B cell (primary cell): ENCODE measurements at regions of chr11 and their contacts with region 1.

Region 1: DNA sequence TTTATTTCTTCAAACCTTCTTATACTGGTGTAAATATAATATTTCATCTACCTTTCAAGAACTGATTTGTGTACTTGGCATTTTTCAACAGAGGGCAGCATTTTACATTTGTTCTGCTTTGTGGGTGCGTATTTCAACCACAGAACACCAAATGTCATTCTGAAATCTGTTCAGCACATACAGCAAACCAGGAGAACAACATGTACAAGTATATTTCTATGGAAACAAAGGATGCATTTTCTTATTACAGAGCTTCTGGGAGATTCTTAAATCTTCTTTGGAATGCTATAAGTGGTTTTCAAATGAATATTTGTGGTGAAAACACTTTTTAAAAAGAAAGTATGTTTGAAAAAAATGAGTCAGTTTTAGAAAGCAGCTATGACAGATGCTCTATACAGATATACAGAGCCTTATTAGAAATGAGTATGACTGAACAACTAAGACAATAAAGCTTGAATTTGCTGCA is 946.0 kb downstream of the FAM181B start:
- DNase-seq: peak; percentile 33
- ATAC-seq: no peak
- H3K4me3 ChIP-seq: no peak overlapping the region
- H3K4me3 Mint-ChIP-seq: no peak overlapping the region
- H3K27ac ChIP-seq: no peak overlapping the region
- H3K27ac Mint-ChIP-seq: no peak overlapping the region
- H3K4me1 ChIP-seq: no peaks in the 10 kb centered on the region
- H3K4me1 Mint-ChIP-seq: no peaks in the 10 kb centered on the region
- H3K27me3 ChIP-seq: no peaks in the 10 kb centered on the region
- H3K27me3 Mint-ChIP-seq: no peaks in the 10 kb centered on the region
- CTCF ChIP-seq: peak; percentile 45

Region 2: DNA sequence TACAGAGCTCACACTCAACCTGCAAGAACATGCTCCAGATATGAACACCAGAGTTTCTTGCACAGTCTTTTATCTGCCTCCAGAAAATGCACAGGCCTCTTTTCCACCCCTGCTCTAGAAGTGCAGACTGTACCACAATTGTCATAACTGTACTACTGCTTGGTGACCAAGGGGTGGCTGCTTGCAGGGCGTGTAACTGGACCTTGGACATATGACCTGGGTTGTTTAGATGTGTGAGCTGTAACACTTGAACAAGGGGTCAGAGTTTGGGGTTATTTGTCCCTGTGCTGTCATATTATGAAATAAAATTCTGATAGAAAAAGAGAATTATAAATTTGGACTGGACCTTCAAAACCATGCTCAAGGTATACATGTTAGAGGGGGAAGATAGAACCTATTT is 239.5 kb before region 1 on chr11:
- CTCF ChIA-PET with region 1: no interaction called
- POLR2A ChIA-PET with region 1: no interaction called
- intact Hi-C with region 1: no loop called
- DNase-seq: no peak
- ATAC-seq: no peak
- H3K4me3 ChIP-seq: no peak overlapping the region
- H3K4me3 Mint-ChIP-seq: no peak overlapping the region
- H3K27ac ChIP-seq: no peak overlapping the region
- H3K27ac Mint-ChIP-seq: no peak overlapping the region
- H3K4me1 ChIP-seq: no peaks in the 10 kb centered on the region
- H3K4me1 Mint-ChIP-seq: no peaks in the 10 kb centered on the region
- H3K27me3 ChIP-seq: no peaks in the 10 kb centered on the region
- H3K27me3 Mint-ChIP-seq: no peaks in the 10 kb centered on the region
- CTCF ChIP-seq: no peak

Region 3: GRCh38 chr11:81829976-81830375 is 42.4 kb after region 1 on chr11:
- CTCF ChIA-PET with region 1: no interaction called
- POLR2A ChIA-PET with region 1: no interaction called
- intact Hi-C with region 1: no loop called
- DNase-seq: no peak
- ATAC-seq: no peak
- H3K4me3 ChIP-seq: no peak overlapping the region
- H3K4me3 Mint-ChIP-seq: no peak overlapping the region
- H3K27ac ChIP-seq: no peak overlapping the region
- H3K27ac Mint-ChIP-seq: no peak overlapping the region
- H3K4me1 ChIP-seq: no peaks in the 10 kb centered on the region
- H3K4me1 Mint-ChIP-seq: no peaks in the 10 kb centered on the region
- H3K27me3 ChIP-seq: no peaks in the 10 kb centered on the region
- H3K27me3 Mint-ChIP-seq: no peaks in the 10 kb centered on the region
- CTCF ChIP-seq: no peak

Region 4: DNA sequence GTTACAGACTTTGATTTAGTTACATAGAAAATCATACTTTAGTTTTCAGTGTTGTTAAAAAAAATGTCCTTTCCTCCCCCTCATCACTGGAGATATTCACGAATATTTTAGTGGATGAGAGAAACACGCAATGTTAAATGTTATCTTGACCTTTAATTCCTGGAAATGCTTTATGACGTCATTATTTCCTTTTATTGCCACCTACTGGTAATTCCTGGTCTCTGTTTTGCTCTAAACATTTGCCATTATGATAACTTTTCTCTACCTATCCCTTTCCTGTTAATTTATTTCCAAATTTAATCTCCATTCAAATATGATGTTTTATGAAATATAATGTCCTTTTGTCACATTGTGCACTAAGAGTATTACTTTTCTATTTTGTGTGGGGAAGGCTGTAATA is 175.4 kb after region 1 on chr11:
- CTCF ChIA-PET with region 1: interaction called, 11 read pairs
- POLR2A ChIA-PET with region 1: no interaction called
- intact Hi-C with region 1: loop called (anchors 5 kb)
- DNase-seq: peak; percentile 8
- ATAC-seq: no peak
- H3K4me3 ChIP-seq: no peak overlapping the region
- H3K4me3 Mint-ChIP-seq: no peak overlapping the region
- H3K27ac ChIP-seq: no peak overlapping the region
- H3K27ac Mint-ChIP-seq: no peak overlapping the region
- H3K4me1 ChIP-seq: no peaks in the 10 kb centered on the region
- H3K4me1 Mint-ChIP-seq: peaks cover 5% of the 10 kb centered on the region
- H3K27me3 ChIP-seq: no peaks in the 10 kb centered on the region
- H3K27me3 Mint-ChIP-seq: no peaks in the 10 kb centered on the region
- CTCF ChIP-seq: no peak

Region 5: DNA sequence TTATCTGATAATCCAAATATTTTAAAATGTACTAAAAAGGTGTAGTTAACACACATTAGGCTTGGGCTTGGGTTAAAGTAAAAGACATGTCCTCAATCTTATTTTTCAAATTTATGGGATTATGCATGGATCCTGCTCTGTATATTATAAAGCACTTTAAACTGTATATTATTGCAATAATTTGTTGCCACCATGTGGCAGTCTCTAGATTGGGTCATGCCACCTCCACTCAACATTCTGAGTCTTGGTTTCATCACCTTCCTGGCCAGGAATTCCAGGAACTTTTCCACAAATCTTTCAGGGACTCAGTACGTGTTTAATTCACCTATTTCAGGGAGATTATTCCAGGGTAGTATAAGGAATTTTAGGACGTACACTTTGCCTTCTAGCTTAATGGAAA is 250.5 kb after region 1 on chr11:
- CTCF ChIA-PET with region 1: interaction called, 3 read pairs
- POLR2A ChIA-PET with region 1: no interaction called
- intact Hi-C with region 1: loop called (anchors 5 kb)
- DNase-seq: no peak
- ATAC-seq: no peak
- H3K4me3 ChIP-seq: no peak overlapping the region
- H3K4me3 Mint-ChIP-seq: no peak overlapping the region
- H3K27ac ChIP-seq: no peak overlapping the region
- H3K27ac Mint-ChIP-seq: no peak overlapping the region
- H3K4me1 ChIP-seq: no peaks in the 10 kb centered on the region
- H3K4me1 Mint-ChIP-seq: no peaks in the 10 kb centered on the region
- H3K27me3 ChIP-seq: no peaks in the 10 kb centered on the region
- H3K27me3 Mint-ChIP-seq: no peaks in the 10 kb centered on the region
- CTCF ChIP-seq: no peak

Region 6: GRCh38 chr11:82229341-82229740 is 441.7 kb after region 1 on chr11:
- CTCF ChIA-PET with region 1: interaction called, 3 read pairs
- POLR2A ChIA-PET with region 1: no interaction called
- intact Hi-C with region 1: loop called (anchors 2 kb)
- DNase-seq: no peak
- ATAC-seq: no peak
- H3K4me3 ChIP-seq: no peak overlapping the region
- H3K4me3 Mint-ChIP-seq: no peak overlapping the region
- H3K27ac ChIP-seq: no peak overlapping the region
- H3K27ac Mint-ChIP-seq: no peak overlapping the region
- H3K4me1 ChIP-seq: no peaks in the 10 kb centered on the region
- H3K4me1 Mint-ChIP-seq: no peaks in the 10 kb centered on the region
- H3K27me3 ChIP-seq: no peaks in the 10 kb centered on the region
- H3K27me3 Mint-ChIP-seq: no peaks in the 10 kb centered on the region
- CTCF ChIP-seq: peak; percentile 36